Colonic mucosa (tissue), 4 donors: ENCODE measurements at regions of chr1 and their contacts with region 1.

Region 1: GRCh38 chr1:182446033-182446669 is 3.8 kb upstream of the RGSL1 start:
- DNase-seq: peak; percentile 48
- H3K4me3 ChIP-seq: no peak overlapping the region
- H3K27ac ChIP-seq: no peak overlapping the region
- H3K4me1 ChIP-seq: no peaks in the 10 kb centered on the region
- H3K27me3 ChIP-seq: no peaks in the 10 kb centered on the region
- CTCF ChIP-seq: peak; percentile 56

Region 2: GRCh38 chr1:182391362-182392044 is 54.6 kb before region 1 on chr1 and contains the start of gene GLUL:
- intact Hi-C with region 1: no loop called
- DNase-seq: peak; percentile 94
- H3K4me3 ChIP-seq: peak within 1 kb of the TSS; percentile 80
- H3K27ac ChIP-seq: peak within 1 kb of the TSS; percentile 98
- H3K4me1 ChIP-seq: no peaks in the 10 kb centered on the region
- H3K27me3 ChIP-seq: no peaks in the 10 kb centered on the region
- CTCF ChIP-seq: no peak
- total RNA-seq, gene GLUL: 343 to 428 TPM

Region 3: DNA sequence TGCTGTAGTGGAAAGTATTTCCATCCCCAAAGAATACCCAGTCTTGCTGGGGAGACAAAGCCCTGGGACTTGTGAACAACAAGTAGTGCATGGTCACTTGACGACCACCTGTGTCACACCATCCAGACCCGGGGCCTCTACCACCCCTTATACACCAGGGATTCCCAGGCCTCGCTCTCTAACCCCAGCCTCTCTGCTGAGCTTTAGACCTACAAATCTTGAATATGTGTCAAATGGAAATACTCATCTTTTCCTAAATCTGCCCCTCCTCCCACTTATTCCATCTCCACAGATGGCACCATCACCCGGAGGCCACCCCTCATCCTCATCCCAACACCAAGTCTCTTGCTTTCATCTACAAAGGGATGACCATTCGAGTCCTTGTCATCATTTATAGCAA is 143.8 kb after region 1 on chr1:
- intact Hi-C with region 1: loop called (anchors 5 kb)
- DNase-seq: peak; percentile 16
- H3K4me3 ChIP-seq: no peak overlapping the region
- H3K27ac ChIP-seq: no peak overlapping the region
- H3K4me1 ChIP-seq: peaks cover 7% of the 10 kb centered on the region
- H3K27me3 ChIP-seq: no peaks in the 10 kb centered on the region
- CTCF ChIP-seq: no peak

Region 4: GRCh38 chr1:182789138-182790076 is 343.3 kb after region 1 on chr1 and contains the start of gene NPL:
- intact Hi-C with region 1: loop called (anchors 5 kb)
- DNase-seq: peak; percentile 83
- H3K4me3 ChIP-seq: peak within 1 kb of the TSS; percentile 47
- H3K27ac ChIP-seq: peak within 1 kb of the TSS; percentile 41
- H3K4me1 ChIP-seq: peaks cover 5% of the 10 kb centered on the region
- H3K27me3 ChIP-seq: no peaks in the 10 kb centered on the region
- CTCF ChIP-seq: no peak
- total RNA-seq, gene NPL: 6.4 to 8.5 TPM